Activated CD4-positive, alpha-beta memory T cell treated with anti-CD3 and anti-CD28 coated beads for 36 hours (primary cell): ENCODE measurements at regions of chr20 and their contacts with region 1.

Region 1: GRCh38 chr20:46022411-46023147 is 6.4 kb upstream of the SLC12A5 start:
- DNase-seq: peak; percentile 80
- H3K4me3 Mint-ChIP-seq: peak overlapping the region; percentile 46
- H3K27ac Mint-ChIP-seq: no peak overlapping the region
- H3K4me1 Mint-ChIP-seq: peaks cover 13% of the 10 kb centered on the region
- H3K27me3 Mint-ChIP-seq: peaks cover 35% of the 10 kb centered on the region

Region 2: DNA sequence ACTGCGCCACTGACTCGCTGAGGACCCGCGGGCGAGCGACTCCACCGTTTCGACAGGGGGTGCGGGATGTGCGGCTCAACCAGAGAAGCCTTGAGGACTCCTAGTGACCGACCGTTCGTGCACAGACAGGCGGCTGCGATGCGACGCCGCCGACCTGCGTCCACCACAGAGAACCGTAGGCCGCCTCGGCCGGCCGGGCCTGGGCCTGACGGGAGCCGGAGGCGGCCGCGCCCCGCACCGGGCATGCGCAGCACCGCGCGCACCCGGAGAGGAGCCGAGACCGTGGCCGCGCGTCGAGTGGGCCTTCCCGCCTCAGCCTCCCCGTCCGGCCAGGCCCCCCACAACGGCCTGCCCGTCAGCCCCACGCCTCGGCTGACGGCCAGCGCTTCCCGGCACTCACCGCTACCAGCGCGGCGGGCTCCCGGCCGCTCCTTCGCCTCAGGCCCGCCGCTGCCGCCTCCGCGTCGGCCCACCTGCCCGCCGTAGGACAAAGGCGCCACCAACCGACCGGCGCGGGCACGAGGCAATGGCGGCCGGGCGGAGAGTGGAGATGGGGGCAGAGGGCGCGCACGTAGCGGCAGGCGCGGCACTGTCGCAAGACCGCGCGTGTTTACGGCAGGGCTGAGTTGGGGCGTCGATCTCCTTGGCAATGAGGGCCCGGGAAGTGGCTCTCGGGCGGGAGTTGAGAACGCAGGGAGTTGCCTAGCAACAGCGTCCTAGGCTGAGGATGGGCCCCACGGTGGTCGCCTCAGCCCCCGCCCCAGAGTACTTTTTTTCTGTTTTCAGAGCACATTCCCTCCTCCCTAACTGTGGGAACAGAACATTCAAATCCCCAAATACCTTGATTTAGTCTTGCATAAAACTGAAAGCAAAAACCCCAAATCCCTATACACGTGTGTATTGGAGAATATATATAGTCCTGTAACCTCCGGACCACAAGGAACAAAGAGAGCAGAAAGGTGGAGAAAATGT is 67.1 kb after region 1 on chr20 and contains the start of gene NCOA5:
- CTCF ChIA-PET with region 1: interaction called, 8 read pairs
- POLR2A ChIA-PET with region 1: no interaction called
- intact Hi-C with region 1: loop called (anchors 2 kb)
- DNase-seq: peak; percentile 97
- H3K4me3 Mint-ChIP-seq: peak within 1 kb of the TSS; percentile 88
- H3K27ac Mint-ChIP-seq: peak within 1 kb of the TSS; percentile 83
- H3K4me1 Mint-ChIP-seq: peaks cover 49% of the 10 kb centered on the region
- H3K27me3 Mint-ChIP-seq: no peaks in the 10 kb centered on the region
- total RNA-seq, gene NCOA5: 13.1 to 13.7 TPM

Region 3: DNA sequence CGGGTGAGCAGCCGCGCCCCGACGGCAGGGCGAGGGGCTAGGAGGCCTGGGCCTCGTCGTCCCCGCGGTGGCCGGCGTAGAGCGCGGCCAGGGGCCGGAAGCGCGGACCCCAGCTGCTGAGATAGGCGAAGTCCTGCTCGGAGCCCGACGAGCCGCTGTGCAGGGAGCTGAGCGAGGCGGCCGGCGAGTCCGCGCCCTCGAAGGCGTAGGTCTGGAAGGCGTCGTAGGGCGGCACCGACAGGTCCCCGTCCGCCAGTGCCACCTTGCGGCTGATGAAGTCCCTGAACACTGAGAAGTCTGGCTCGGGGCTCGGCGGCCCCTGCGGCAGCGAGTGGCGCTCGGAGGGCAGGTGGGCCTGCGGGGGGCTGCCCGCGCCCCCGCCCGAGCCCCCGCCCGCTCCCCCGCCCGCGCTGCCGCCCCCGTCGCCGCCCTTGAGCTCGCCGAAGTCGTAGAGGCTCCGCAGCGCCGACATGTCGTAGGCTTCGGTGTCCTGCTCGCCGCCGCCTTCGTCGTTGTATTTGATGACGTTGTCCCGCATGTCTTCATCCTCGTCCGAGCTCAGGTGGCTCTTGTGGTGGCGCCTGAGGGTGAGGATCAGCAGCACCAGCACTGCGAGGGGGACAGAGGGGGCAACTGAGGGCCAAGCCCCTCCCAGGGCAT is 152.0 kb after region 1 on chr20:
- CTCF ChIA-PET with region 1: interaction called, 49 read pairs
- POLR2A ChIA-PET with region 1: no interaction called
- intact Hi-C with region 1: loop called (anchors 2 kb)
- DNase-seq: peak; percentile 78
- H3K4me3 Mint-ChIP-seq: no peak overlapping the region
- H3K27ac Mint-ChIP-seq: no peak overlapping the region
- H3K4me1 Mint-ChIP-seq: peaks cover 2% of the 10 kb centered on the region
- H3K27me3 Mint-ChIP-seq: peaks cover 42% of the 10 kb centered on the region

Region 4: GRCh38 chr20:46349035-46349741 is 326.6 kb after region 1 on chr20:
- CTCF ChIA-PET with region 1: interaction called, 13 read pairs
- POLR2A ChIA-PET with region 1: no interaction called
- intact Hi-C with region 1: no loop called
- DNase-seq: peak; percentile 65
- H3K4me3 Mint-ChIP-seq: no peak overlapping the region
- H3K27ac Mint-ChIP-seq: no peak overlapping the region
- H3K4me1 Mint-ChIP-seq: peaks cover 23% of the 10 kb centered on the region
- H3K27me3 Mint-ChIP-seq: no peaks in the 10 kb centered on the region